ENCODE measurements at regions of chr10 and their contacts with region 1.

Region 1: GRCh38 chr10:23368816-23369640 is 24.4 kb upstream of the C10orf67 start:
- DNase-seq: no peak
- H3K4me3 ChIP-seq: no peak overlapping the region
- H3K4me3 Mint-ChIP-seq: no peak overlapping the region
- H3K27ac Mint-ChIP-seq: no peak overlapping the region
- H3K4me1 ChIP-seq: no peaks in the 10 kb centered on the region
- H3K4me1 Mint-ChIP-seq: peaks cover 6% of the 10 kb centered on the region
- H3K27me3 ChIP-seq: no peaks in the 10 kb centered on the region
- H3K27me3 Mint-ChIP-seq: peaks cover 4% of the 10 kb centered on the region
- CTCF ChIP-seq: no peak

Region 2: GRCh38 chr10:23386052-23386451 is 17.0 kb after region 1 on chr10:
- CTCF ChIA-PET with region 1: no interaction called
- POLR2A ChIA-PET with region 1: interaction called, 11 read pairs
- intact Hi-C with region 1: no loop called
- DNase-seq: no peak
- H3K4me3 ChIP-seq: no peak overlapping the region
- H3K4me3 Mint-ChIP-seq: no peak overlapping the region
- H3K27ac Mint-ChIP-seq: no peak overlapping the region
- H3K4me1 ChIP-seq: no peaks in the 10 kb centered on the region
- H3K4me1 Mint-ChIP-seq: no peaks in the 10 kb centered on the region
- H3K27me3 ChIP-seq: no peaks in the 10 kb centered on the region
- H3K27me3 Mint-ChIP-seq: peaks cover 2% of the 10 kb centered on the region
- CTCF ChIP-seq: no peak